ENCODE measurements at regions of chr1 and their contacts with region 1.

Region 1: DNA sequence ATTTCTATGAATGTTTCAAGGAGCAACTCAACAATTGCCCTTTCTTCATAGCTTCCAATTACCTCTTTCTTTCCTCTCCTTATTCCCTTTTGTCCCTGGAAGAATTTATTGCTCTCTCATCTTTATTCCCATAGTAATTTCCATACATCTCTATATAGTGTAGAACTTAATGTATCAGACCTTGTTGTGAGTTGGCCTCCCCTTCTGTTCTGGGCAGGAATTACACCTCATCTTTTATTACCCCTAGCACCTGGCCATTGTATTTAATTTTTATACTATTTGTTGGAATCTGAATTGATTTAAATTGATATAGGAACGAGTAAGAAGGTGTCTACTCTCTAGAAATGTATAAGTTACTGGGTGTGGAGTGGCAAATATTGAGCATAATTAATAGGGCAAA is 114.5 kb downstream of the CACHD1 start:
- DNase-seq: no peak
- H3K4me3 ChIP-seq: no peak overlapping the region
- H3K27ac ChIP-seq: no peak overlapping the region
- H3K4me1 ChIP-seq: no peaks in the 10 kb centered on the region
- H3K27me3 ChIP-seq: no peaks in the 10 kb centered on the region
- CTCF ChIP-seq: peak; percentile 18

Region 2: DNA sequence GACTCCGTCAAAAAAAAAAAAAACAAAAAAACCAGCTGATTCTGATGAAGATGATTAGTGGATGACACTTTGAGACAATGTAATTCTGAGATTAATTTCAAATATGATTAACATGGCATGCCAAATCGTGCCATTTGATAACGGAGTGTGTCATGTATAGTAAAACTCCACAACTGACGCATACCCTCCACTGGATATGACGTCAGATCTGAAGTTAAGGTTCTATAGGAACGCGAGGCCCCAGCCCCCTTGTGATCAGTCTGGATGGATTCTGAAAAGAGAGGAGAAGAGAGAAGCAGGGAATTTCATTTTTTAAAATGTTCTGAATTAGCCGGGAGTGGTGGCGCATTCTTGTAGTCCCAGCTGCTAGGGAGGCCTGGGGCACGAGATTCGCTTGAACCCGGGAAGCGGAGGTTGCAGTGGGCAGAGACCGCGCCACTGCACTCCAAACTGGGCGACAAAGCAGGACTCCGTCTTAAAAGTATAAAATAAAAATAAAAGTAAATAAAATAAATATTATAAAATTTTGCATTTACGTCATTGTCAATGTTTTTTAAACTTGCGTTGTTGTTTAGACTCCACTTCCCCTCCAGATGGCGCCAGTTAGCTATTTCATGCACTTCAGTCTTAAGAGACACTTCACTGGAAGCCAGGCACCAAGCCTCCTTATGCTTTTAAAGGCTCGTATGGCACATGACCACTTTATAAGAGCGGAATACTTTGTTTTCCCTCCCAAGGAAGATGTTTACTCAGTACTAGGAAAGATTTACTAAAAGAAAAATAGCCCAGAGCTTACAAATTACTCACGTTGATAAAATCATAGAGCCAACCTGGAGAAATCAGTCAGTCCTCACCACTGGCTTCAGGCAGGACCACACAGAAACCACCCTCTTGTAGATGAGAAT is 315.6 kb before region 1 on chr1:
- intact Hi-C with region 1: loop called (anchors 5 kb)
- DNase-seq: peak; percentile 81
- H3K4me3 ChIP-seq: no peak overlapping the region
- H3K27ac ChIP-seq: no peak overlapping the region
- H3K4me1 ChIP-seq: no peaks in the 10 kb centered on the region
- H3K27me3 ChIP-seq: no peaks in the 10 kb centered on the region
- CTCF ChIP-seq: peak; percentile 60

Region 3: DNA sequence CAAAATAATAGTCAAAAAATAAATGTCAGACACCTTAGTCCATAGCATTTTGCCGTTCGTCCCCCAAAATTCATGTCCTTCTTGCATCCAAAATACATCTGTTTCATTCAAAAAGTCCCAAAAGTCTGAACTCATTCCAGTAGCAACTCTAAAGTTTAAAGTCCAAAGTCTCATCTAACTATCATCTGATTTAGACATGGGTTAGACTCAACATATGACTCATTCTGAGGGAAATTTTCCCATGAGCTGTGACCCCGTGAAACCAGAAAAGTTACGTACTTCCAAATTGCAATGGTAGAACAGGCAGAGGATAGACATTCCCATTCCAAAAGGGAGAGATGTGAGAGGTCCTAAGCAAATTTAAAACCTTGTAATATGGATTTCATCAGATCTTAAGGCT is 163.1 kb before region 1 on chr1:
- intact Hi-C with region 1: no loop called
- DNase-seq: no peak
- H3K4me3 ChIP-seq: no peak overlapping the region
- H3K27ac ChIP-seq: no peak overlapping the region
- H3K4me1 ChIP-seq: no peaks in the 10 kb centered on the region
- H3K27me3 ChIP-seq: no peaks in the 10 kb centered on the region
- CTCF ChIP-seq: no peak